WTC11 (cell line): ENCODE measurements at regions of chr3 and their contacts with region 1.

Region 1: DNA sequence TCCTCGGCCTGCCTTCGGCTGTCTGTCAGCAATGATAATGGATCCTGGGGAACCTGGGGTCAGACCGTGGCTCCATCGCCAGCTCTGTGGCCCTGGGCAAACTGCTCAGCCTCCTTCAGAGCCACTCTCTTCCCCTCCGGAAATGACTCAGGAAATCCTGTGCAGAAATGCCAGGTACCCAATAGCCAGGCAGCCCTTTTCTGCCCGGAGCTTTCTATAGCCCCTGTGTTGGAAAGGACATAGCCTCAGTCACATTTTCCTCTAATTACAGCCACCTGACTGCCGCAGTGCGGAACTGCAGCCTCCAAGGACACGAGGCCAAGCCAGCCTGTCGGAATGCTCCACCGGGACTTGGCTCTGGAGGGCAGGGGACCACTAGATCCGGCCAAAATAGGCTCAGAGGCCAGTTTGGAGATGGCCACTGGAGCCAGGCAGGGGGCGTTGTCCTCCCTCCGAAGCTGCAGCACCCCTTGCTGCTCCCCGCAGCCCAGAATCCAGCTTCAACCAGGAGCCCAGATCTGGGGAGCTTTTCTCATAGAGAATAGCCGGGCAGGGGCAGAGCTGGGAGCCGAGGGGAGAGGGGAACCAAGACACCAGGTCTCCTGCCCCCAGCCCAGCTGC is 11.6 kb upstream of the ZXDC start:
- DNase-seq: peak; percentile 62
- ATAC-seq: peak; percentile 56
- H3K4me3 Mint-ChIP-seq: no peak overlapping the region
- H3K27ac Mint-ChIP-seq: no peak overlapping the region
- H3K4me1 Mint-ChIP-seq: peaks cover 43% of the 10 kb centered on the region
- H3K27me3 Mint-ChIP-seq: no peaks in the 10 kb centered on the region; the same call in 1 of the 2 replicates
- CTCF ChIP-seq: no peak

Region 2: DNA sequence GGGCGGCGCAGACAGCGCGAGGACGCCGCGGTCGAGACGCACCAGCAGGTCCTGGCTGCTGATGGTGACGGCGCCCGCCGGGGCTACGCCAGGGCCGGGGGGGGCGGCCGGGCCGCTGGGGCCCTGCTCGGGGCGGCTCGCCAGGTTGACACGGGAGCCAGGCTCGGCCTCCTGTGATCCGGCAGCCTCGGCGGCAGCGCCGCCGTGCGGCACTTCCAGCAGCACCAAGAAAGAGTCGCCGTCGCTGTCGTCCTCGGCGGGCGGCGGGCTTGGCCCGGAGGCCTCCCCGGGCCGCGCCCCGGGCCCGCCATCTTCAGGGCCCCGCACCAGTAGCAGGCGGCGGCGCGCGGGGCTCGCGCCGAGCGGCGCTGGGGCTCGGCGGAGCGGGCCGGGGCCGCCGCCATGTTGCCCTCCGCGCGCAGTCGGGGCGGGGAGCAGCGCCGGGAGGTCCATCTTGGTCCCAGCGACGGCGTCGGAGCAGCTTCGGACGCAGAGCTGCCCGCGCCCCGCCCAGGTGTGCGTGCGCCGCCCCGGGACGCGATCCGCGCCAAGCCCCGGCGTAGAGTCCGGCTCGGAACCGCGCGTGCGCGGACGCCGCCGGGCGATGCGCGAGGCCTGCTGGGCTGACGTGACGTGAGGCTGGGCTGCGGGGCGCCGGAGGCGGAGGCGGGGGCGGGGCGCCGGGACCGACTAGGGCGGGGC is 11.7 kb before region 1 on chr3 and contains the start of gene ZXDC:
- CTCF ChIA-PET with region 1: interaction called, 18 read pairs
- POLR2A ChIA-PET with region 1: interaction called, 5 read pairs
- DNase-seq: peak; percentile 90
- ATAC-seq: peak; percentile 81
- H3K4me3 Mint-ChIP-seq: peak within 1 kb of the TSS; percentile 89
- H3K27ac Mint-ChIP-seq: peak within 1 kb of the TSS; percentile 61
- H3K4me1 Mint-ChIP-seq: peaks cover 39% of the 10 kb centered on the region
- H3K27me3 Mint-ChIP-seq: no peaks in the 10 kb centered on the region
- CTCF ChIP-seq: no peak
- total RNA-seq, gene ZXDC: 32.9 to 34.7 TPM (median 33.4 TPM) in 3 replicates

Region 3: DNA sequence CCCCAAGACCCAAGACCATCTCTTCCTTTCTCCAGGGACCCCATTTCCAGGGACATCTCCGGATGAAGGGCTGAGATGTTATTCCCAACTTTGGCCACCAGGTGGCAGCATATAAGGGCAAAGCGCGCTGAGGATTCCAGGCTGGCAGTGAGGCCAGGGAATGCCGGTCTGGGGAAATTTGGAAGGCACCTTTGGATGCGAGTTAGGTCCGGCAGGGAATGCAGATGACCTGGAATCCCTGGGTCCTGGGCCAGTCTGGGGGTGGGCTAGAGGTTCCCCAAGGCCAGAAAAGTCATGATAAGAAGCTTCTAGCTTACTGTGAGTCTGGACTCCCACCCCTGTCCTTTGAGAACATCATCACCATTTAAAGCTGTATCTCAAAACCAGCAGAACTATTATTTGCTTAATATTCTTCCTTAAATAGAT is 35.1 kb after region 1 on chr3:
- CTCF ChIA-PET with region 1: interaction called, 12 read pairs
- POLR2A ChIA-PET with region 1: no interaction called
- DNase-seq: peak; percentile 79
- ATAC-seq: peak; percentile 11
- H3K4me3 Mint-ChIP-seq: no peak overlapping the region
- H3K27ac Mint-ChIP-seq: no peak overlapping the region
- H3K4me1 Mint-ChIP-seq: peaks cover 8% of the 10 kb centered on the region
- H3K27me3 Mint-ChIP-seq: peaks cover 23% of the 10 kb centered on the region
- CTCF ChIP-seq: peak; percentile 98

Region 4: DNA sequence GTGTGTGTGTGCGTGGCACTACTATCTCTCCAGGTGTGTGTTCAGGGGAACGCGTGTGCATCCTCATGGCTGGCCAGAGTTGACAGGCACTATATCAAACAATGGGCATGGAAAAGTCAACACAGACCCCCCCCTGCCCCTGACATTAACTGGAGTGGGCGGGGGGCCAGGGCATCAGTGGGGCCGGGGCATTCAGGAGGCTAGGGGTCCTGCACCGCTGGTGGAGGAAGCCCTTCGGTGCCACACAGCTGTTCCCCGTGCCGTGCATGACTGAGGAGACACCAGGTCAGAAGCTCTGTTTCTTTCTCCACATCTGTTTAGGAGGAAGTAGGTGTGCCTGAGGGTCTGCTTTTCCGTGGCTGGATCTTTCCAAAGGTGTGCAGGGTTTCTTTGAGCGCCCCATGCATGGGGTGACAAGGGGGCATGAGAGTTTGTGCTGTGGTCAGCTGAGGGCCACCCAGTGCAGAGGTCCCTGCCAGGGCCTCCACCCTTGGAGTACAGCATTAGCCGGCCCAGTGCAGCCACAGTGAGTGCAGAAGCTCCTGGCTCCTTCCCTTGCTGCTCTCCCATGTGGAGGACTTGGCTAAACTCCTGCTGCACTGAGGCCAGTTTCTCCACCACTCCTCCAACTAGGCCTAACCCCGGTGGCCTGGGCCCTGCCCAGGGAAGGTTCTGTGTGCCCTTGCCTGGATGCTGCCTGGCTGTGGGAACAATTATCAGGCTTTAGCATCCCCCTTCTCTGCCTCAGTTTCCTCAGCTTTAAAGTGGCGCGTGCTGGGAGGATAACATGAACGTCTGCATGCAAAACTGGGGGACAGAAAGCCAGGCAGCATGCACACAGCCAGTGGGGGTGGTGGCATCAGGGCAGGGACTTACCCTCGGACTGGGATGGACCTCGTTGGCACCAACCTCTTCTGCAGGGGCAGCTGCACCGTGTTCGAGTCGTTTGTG is 64.1 kb after region 1 on chr3:
- CTCF ChIA-PET with region 1: no interaction called
- POLR2A ChIA-PET with region 1: no interaction called
- DNase-seq: no peak
- ATAC-seq: no peak
- H3K4me3 Mint-ChIP-seq: no peak overlapping the region
- H3K27ac Mint-ChIP-seq: no peak overlapping the region
- H3K4me1 Mint-ChIP-seq: peaks cover 43% of the 10 kb centered on the region
- H3K27me3 Mint-ChIP-seq: no peaks in the 10 kb centered on the region; the same call in 1 of the 2 replicates
- CTCF ChIP-seq: no peak